GM10248 (cell line): ENCODE measurements at regions of chr7 and their contacts with region 1.

Region 1: DNA sequence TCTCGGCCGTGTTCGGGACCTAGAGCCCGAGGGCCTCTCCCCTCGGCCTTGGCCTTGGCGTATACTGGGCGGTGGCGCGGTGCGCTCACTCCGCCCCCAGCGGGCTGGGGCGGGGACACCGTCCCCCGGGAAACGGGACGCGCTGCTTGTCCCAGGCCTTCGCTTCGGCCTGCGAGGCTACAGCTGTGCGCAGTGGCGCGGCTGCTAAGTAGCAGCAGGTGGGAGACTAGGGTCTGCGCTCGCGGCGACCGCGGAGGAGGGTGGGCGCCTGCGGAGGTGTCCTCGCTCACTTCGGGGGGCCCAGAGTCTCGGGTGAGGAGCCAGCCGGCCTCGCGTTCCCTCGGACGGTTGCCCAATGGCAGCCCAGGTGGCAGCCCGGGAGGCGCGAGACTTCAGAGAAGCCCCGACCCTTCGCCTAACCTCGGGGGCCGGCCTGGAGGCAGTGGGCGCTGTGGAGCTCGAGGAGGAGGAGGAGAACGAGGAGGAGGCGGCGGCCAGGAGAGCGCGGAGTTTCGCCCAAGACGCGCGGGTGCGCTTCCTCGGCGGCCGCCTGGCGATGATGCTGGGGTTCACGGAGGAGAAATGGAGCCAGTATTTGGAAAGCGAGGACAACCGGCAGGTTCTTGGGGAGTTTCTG is at the start of gene DNAH11:
- DNase-seq: peak; percentile 77
- CTCF ChIP-seq: no peak

Region 2: DNA sequence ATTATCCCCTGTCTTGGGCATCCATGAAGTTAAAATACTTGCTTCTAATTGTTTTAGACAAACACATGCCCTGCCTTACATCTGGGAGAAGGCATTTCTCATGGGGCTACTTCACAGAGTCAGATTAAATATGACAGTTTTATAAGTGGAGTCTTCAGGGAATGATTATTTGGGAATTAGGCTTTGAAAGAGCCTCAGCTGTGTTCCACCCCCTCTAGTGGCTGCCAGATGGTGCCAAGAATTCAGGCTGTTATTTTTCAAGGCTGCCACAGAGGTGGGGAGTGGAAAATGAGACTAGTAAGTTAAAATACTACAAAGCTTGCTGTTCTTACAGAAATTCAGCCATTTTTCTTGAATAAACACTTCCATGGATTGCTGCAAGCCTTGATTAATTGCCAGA is 45.9 kb before region 1 on chr7:
- CTCF ChIA-PET with region 1: no interaction called
- POLR2A ChIA-PET with region 1: no interaction called
- DNase-seq: no peak
- CTCF ChIP-seq: no peak

Region 3: GRCh38 chr7:21508538-21508937 is 34.5 kb before region 1 on chr7:
- CTCF ChIA-PET with region 1: no interaction called
- POLR2A ChIA-PET with region 1: no interaction called
- DNase-seq: no peak
- CTCF ChIP-seq: no peak

Region 4: GRCh38 chr7:21587139-21587784 is 44.3 kb after region 1 on chr7:
- CTCF ChIA-PET with region 1: no interaction called
- POLR2A ChIA-PET with region 1: interaction called, 11 read pairs
- DNase-seq: no peak
- CTCF ChIP-seq: no peak

Region 5: GRCh38 chr7:21603972-21604749 is 61.2 kb after region 1 on chr7:
- CTCF ChIA-PET with region 1: no interaction called
- POLR2A ChIA-PET with region 1: no interaction called
- DNase-seq: peak; percentile 12
- CTCF ChIP-seq: no peak

Region 6: GRCh38 chr7:21704359-21704758 is 161.3 kb after region 1 on chr7:
- CTCF ChIA-PET with region 1: no interaction called
- POLR2A ChIA-PET with region 1: no interaction called
- DNase-seq: no peak
- CTCF ChIP-seq: no peak